A673 (cell line): ENCODE measurements at regions of chr18 and their contacts with region 1.

Region 1: DNA sequence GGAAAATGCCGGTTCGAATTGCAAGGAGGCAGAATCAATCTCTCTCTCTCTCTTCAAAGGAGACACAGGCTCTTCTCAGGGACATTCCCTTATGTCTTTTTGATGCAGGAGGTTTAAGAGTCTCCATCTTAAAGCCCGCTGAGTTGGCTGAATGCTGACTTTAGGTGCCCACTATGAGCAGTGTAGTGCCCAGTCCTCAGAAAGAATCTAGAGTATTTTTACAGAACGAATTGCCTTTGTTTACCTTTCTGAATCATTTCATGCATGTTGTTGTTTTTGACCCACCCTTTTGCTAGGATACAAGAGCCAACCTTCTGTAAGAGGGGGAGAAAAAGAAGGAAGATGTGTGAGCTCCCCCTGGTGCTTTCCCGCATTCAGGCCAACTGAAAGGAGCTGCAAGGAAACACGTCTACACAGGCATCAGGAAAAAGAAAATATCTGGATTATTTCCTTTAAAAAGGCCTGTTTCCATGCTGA is 193.5 kb upstream of the TCF4 start:
- DNase-seq: peak; percentile 87
- H3K4me3 ChIP-seq: no peak overlapping the region
- H3K27ac ChIP-seq: no peak overlapping the region
- H3K4me1 ChIP-seq: peaks cover 32% of the 10 kb centered on the region
- H3K27me3 ChIP-seq: no peaks in the 10 kb centered on the region
- CTCF ChIP-seq: peak; percentile 87

Region 2: DNA sequence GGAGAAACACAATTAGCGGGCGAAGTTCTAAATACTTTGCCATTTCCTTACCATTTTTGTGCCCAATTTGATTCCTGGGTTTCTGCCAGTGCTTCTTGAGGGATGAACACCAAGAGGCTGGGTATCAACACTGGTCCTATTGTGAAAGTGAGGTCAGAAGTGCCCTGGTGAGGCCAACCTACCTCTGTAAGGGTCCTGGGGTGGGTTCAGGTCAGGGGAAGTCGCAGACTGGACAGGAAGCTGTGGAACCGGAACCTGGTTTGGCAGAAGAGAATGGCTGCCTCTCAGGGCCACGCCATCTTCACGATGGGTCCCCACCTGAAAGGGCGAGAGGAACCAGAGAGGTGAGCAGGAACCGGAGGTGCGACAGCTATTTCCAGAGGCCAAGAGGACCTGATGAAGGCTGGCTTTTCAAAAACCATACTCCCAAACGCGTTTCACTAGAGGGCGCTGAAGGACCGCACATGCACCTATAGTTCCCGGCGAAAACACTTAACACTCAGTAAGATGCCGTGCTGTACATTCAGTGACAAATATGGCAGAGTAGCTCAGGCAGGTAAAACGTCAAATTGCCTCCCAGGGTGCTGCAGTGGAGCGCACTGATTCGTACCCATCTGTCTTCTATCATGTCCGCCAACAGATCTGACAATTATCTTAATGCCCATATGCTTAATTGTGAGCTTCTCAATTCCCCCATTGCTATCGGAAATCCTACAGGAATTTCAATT is 547.0 kb before region 1 on chr18:
- CTCF ChIA-PET with region 1: interaction called, 11 read pairs
- POLR2A ChIA-PET with region 1: no interaction called
- intact Hi-C with region 1: loop called (anchors 1 kb)
- DNase-seq: peak; percentile 91
- H3K4me3 ChIP-seq: peak overlapping the region; percentile 3
- H3K27ac ChIP-seq: peak overlapping the region; percentile 19
- H3K4me1 ChIP-seq: peaks cover 32% of the 10 kb centered on the region
- H3K27me3 ChIP-seq: no peaks in the 10 kb centered on the region
- CTCF ChIP-seq: peak; percentile 83

Region 3: DNA sequence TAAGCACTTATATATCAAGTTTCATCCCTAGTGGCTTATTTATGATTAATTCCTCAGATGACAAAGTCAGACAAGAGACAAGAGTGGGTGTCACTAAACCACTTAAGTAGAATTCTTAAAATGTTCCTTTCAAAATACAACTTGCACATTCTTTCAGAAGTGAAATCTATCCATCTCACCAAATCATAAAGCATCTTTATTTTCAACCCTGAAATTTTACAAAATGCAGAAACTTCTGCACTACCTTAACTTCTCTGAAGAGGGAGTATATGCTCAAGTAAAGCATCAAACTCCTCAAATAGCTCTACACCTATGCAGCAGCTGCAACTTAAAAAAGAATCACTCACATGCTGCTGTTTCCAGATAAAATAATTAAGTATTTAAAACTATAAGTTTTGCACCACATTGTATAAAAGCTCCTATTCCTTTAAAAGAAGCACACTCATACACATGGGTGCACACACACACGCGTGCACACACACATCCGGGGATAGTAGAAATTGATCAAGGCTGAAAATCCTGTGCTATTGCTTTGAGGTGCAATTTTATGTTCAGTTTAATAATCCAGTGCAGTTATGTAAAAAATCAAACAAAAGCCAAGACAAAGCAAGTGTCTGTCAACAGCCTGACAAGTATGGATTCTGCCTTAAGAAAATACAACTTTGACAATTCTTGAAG is 438.0 kb before region 1 on chr18:
- CTCF ChIA-PET with region 1: interaction called, 7 read pairs
- POLR2A ChIA-PET with region 1: no interaction called
- intact Hi-C with region 1: loop called (anchors 2 kb)
- DNase-seq: peak; percentile 92
- H3K4me3 ChIP-seq: no peak overlapping the region
- H3K27ac ChIP-seq: peak overlapping the region; percentile 79
- H3K4me1 ChIP-seq: peaks cover 95% of the 10 kb centered on the region
- H3K27me3 ChIP-seq: no peaks in the 10 kb centered on the region
- CTCF ChIP-seq: peak; percentile 80

Region 4: GRCh38 chr18:55384551-55385275 is 396.8 kb before region 1 on chr18:
- CTCF ChIA-PET with region 1: interaction called, 11 read pairs
- POLR2A ChIA-PET with region 1: no interaction called
- intact Hi-C with region 1: loop called (anchors 1 kb)
- DNase-seq: peak; percentile 79
- H3K4me3 ChIP-seq: no peak overlapping the region
- H3K27ac ChIP-seq: no peak overlapping the region
- H3K4me1 ChIP-seq: no peaks in the 10 kb centered on the region
- H3K27me3 ChIP-seq: no peaks in the 10 kb centered on the region
- CTCF ChIP-seq: peak; percentile 86

Region 5: GRCh38 chr18:55415258-55415871 is 366.2 kb before region 1 on chr18:
- CTCF ChIA-PET with region 1: interaction called, 7 read pairs
- POLR2A ChIA-PET with region 1: no interaction called
- intact Hi-C with region 1: loop called (anchors 1 kb)
- DNase-seq: peak; percentile 87
- H3K4me3 ChIP-seq: no peak overlapping the region
- H3K27ac ChIP-seq: no peak overlapping the region
- H3K4me1 ChIP-seq: peaks cover 72% of the 10 kb centered on the region
- H3K27me3 ChIP-seq: no peaks in the 10 kb centered on the region
- CTCF ChIP-seq: peak; percentile 99

Region 6: DNA sequence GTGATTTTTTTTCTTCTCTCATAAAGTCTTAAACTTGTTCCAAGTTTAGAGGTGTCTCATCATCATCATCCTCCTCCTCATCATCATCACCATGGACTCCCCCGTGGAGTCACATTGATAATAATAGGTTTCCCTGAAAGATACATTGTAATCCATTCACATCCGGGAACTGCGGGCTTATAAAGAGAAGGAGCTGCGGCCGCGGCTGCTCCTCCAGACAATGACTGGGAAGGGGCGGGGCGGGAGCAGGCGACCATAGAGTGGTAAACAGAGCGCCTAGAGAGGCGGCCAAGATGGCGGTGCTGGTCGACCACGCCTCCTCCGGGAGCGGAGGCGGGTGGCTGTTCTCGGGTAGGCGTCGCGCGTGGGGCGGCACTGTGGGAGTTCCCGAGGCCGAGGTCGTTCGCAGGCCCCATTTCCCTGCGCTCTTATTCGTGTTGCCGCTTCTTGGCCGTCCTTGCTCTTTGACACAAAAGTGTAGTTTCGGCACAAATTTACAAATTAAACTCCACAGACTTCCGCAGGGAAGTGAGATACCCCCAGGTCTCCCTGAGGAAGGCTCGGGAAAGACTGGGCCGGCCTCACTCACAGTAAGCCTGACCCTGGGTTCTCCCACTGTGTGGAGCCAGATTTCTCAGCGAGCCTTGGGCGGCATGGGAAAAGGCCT is 191.8 kb before region 1 on chr18:
- CTCF ChIA-PET with region 1: interaction called, 3 read pairs
- POLR2A ChIA-PET with region 1: no interaction called
- intact Hi-C with region 1: loop called (anchors 2 kb)
- DNase-seq: peak; percentile 97
- H3K4me3 ChIP-seq: peak overlapping the region; percentile 64
- H3K27ac ChIP-seq: peak overlapping the region; percentile 77
- H3K4me1 ChIP-seq: peaks cover 19% of the 10 kb centered on the region
- H3K27me3 ChIP-seq: no peaks in the 10 kb centered on the region
- CTCF ChIP-seq: no peak

Region 7: GRCh38 chr18:55907453-55908175 is 126.1 kb after region 1 on chr18:
- CTCF ChIA-PET with region 1: no interaction called
- POLR2A ChIA-PET with region 1: no interaction called
- intact Hi-C with region 1: no loop called
- DNase-seq: no peak
- H3K4me3 ChIP-seq: no peak overlapping the region
- H3K27ac ChIP-seq: no peak overlapping the region
- H3K4me1 ChIP-seq: no peaks in the 10 kb centered on the region
- H3K27me3 ChIP-seq: no peaks in the 10 kb centered on the region
- CTCF ChIP-seq: no peak

Region 8: DNA sequence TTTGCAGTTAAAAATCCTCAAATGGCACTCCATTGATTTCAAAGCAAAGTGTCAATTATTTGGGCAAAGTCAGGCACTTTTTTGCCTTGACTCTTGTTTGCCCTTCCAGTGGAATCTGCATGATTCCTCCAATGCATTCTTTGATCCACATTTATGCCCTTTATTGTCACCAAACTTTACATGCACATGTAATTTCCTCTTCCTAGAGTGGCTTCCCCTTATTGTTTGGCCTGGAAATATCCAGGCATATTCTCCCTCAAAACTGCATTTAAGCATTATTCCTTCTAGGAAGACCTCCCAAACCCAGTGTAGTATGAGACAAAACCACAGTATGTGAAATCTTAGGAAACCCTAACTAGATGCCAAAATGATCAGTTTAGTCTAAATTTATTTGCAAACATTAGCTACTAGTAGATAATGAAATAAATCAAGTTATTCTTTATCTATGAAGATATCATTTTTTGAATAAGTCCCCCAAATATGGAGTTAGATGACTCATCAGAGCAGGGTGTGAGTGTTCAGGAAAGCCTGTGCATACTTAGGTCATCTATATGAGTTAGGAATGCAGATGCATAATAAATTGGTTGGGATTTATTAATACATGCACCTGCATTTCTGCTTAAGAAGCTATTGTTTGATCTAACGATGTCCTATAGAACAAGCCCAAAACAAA is 239.8 kb after region 1 on chr18:
- CTCF ChIA-PET with region 1: interaction called, 13 read pairs
- POLR2A ChIA-PET with region 1: no interaction called
- intact Hi-C with region 1: no loop called
- DNase-seq: no peak
- H3K4me3 ChIP-seq: no peak overlapping the region
- H3K27ac ChIP-seq: no peak overlapping the region
- H3K4me1 ChIP-seq: no peaks in the 10 kb centered on the region
- H3K27me3 ChIP-seq: no peaks in the 10 kb centered on the region
- CTCF ChIP-seq: no peak